Breast epithelium (tissue), 4 donors: ENCODE measurements at regions of chr4 and their contacts with region 1.

Region 1: DNA sequence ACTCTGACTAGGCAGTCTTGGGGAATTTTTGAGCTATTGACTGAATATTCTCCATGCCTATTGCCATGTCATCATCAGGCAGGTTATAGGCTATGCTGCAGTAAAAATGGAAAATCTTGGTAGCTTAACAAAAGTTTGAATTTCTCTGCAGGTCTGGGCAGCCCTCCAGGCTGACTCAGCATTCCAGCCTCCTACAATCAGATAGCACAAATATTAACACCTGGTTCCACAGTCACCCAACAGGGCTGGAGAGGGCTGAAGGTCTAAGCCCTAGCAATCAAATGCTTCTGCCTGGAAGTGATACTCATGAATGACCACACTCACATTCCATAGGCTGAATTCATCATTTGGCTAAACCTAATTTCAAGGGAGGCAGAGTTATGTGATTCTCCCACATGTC is 9.6 kb upstream of the PPP3CA start:
- DNase-seq: no peak
- H3K4me3 ChIP-seq: no peak overlapping the region
- H3K27ac ChIP-seq: no peak overlapping the region
- H3K4me1 ChIP-seq: no peaks in the 10 kb centered on the region
- H3K27me3 ChIP-seq: no peaks in the 10 kb centered on the region
- CTCF ChIP-seq: no peak
- POLR2A ChIP-seq: no peak

Region 2: DNA sequence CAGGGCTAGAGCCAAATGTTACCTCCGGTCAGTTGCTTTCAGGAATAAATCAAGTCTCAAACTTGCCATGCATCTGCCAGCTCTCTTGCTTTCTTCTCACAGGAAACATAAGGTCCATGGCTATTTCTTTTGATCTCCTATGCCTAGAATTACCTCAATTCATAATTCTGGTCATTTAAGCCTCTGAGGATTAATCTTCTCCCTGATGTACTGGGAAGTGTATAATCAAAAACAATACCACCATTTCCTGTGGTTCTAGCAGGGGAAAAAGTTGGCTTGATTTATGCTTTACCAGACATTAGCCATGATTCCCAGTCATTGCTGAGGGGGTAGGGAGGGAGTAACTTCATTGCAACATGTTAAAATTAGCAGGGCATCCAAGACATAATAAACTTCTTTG is 570.4 kb before region 1 on chr4:
- intact Hi-C with region 1: loop called (anchors 10 kb)
- DNase-seq: no peak
- H3K4me3 ChIP-seq: no peak overlapping the region
- H3K27ac ChIP-seq: no peak overlapping the region
- H3K4me1 ChIP-seq: no peaks in the 10 kb centered on the region
- H3K27me3 ChIP-seq: no peaks in the 10 kb centered on the region
- CTCF ChIP-seq: no peak
- POLR2A ChIP-seq: no peak

Region 3: GRCh38 chr4:100872811-100873210 is 484.1 kb before region 1 on chr4:
- intact Hi-C with region 1: loop called (anchors 5 kb)
- DNase-seq: no peak
- H3K4me3 ChIP-seq: no peak overlapping the region
- H3K27ac ChIP-seq: no peak overlapping the region
- H3K4me1 ChIP-seq: no peaks in the 10 kb centered on the region
- H3K27me3 ChIP-seq: no peaks in the 10 kb centered on the region
- CTCF ChIP-seq: no peak
- POLR2A ChIP-seq: no peak

Region 4: GRCh38 chr4:101279377-101279871 is 77.5 kb before region 1 on chr4:
- intact Hi-C with region 1: no loop called
- DNase-seq: no peak
- H3K4me3 ChIP-seq: no peak overlapping the region
- H3K27ac ChIP-seq: no peak overlapping the region
- H3K4me1 ChIP-seq: no peaks in the 10 kb centered on the region
- H3K27me3 ChIP-seq: no peaks in the 10 kb centered on the region
- CTCF ChIP-seq: no peak
- POLR2A ChIP-seq: no peak

Region 5: GRCh38 chr4:101328063-101328602 is 28.8 kb before region 1 on chr4:
- intact Hi-C with region 1: no loop called
- DNase-seq: no peak
- H3K4me3 ChIP-seq: no peak overlapping the region
- H3K27ac ChIP-seq: no peak overlapping the region
- H3K4me1 ChIP-seq: no peaks in the 10 kb centered on the region
- H3K27me3 ChIP-seq: no peaks in the 10 kb centered on the region
- CTCF ChIP-seq: no peak
- POLR2A ChIP-seq: no peak